ENCODE measurements at regions of chr4 and their contacts with region 1.

Region 1: DNA sequence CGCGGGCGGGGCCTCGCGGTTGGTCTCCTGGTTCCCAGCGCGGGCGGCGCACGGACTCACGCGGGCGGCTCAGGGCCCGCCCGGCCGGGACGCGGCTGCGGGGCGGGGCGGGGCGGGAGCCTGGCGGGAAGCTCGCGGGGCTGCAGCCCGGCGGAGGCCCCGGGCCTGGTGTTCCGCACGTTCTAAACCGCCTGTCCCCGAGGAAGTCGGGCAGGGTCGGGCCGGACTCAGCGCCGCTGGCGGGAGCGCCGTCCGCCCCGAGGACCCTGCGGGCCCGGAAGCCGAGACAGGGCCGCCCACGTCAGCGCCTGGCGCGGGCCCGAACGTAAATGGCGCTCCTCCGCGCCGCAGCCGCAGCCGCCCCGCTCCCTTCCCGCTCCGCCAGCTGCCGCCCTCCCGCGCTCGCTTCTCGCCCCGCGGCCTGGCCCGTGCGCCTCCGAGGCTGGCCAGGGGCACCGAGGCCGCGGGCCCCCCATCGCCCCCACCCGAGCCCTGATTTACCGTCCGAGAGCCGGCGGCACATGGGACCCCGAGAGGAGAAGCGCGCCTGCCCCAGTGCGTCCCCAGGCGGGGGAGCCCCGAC is 309 bp upstream of the CTBP1 start:
- DNase-seq: peak; percentile 95
- ATAC-seq: peak; percentile 68

Region 2: GRCh38 chr4:1167247-1167949 is 81.8 kb before region 1 on chr4:
- intact Hi-C with region 1: loop called (anchors 1 kb)
- DNase-seq: peak; percentile 92
- ATAC-seq: peak; percentile 84

Region 3: DNA sequence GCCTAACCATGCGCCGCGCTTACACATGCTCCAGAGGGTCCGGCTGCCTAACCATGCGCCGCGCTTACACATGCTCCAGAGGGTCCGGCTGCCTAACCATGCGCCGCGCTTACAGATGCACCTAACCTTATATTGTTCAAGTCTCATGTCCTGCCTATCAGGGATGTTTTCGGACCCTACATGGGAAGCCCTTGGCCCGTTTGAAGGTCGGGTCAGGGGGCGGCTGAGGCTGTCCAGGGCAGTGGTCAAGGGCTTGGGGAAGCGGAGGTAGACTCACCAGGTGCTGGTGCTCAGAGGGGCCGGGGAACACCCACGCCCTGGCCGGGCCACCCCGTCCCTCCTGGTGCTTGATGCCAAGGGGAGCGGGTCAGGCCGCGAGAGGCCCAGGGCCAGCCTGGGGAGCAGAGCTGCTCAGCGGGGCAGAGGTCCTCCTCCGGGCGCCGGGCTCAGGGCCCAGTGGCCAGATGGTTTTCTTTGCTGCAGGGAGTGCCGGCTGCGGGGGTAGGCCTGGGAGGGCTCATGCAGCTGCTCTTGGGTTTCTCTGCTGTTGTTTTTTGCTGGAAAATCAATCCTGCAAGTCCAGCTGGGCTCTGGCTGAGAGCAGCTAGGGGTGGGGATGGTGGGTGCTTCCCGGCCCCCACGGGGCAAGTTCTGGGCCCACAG is 41.5 kb before region 1 on chr4:
- intact Hi-C with region 1: loop called (anchors 5 kb)
- DNase-seq: peak; percentile 84
- ATAC-seq: peak; percentile 66

Region 4: GRCh38 chr4:1289207-1290164 is 40.2 kb after region 1 on chr4 and contains the start of gene MAEA:
- intact Hi-C with region 1: loop called (anchors 2 kb)
- DNase-seq: peak; percentile 97
- ATAC-seq: peak; percentile 98
- total RNA-seq, gene MAEA: 50.4 TPM

Region 5: GRCh38 chr4:1346781-1347409 is 97.7 kb after region 1 on chr4 and contains the start of gene UVSSA:
- intact Hi-C with region 1: loop called (anchors 1 kb)
- DNase-seq: peak; percentile 100
- ATAC-seq: peak; percentile 98
- total RNA-seq, gene UVSSA: 6.5 TPM

Region 6: GRCh38 chr4:1981251-1982058 is 732.2 kb after region 1 on chr4:
- intact Hi-C with region 1: no loop called
- DNase-seq: no peak
- ATAC-seq: no peak

Measured in Right ventricle myocardium inferior (tissue), 1 donor.